ENCODE measurements at regions of chr18 and their contacts with region 1.

Region 1: GRCh38 chr18:21612125-21612991 is at the start of gene SNRPD1:
- DNase-seq: peak; percentile 83 to 90 (median 86)
- H3K4me3 ChIP-seq: peak within 1 kb of the TSS; percentile 93 to 97
- H3K4me3 Mint-ChIP-seq: peak within 1 kb of the TSS; percentile 97 to 100 (median 99)
- H3K27ac ChIP-seq: peak within 1 kb of the TSS; percentile 85
- H3K27ac Mint-ChIP-seq: peak within 1 kb of the TSS; percentile 97 to 100 (median 99)
- H3K4me1 ChIP-seq: peaks cover 41% of the 10 kb centered on the region
- H3K4me1 Mint-ChIP-seq: peaks cover 26 to 55% (median 37%) of the 10 kb centered on the region in 4 donors
- H3K27me3 ChIP-seq: no peaks in the 10 kb centered on the region
- H3K27me3 Mint-ChIP-seq: no peaks in the 10 kb centered on the region
- total RNA-seq, gene SNRPD1: 24.4 to 24.5 TPM

Region 2: GRCh38 chr18:21656402-21656801 is 44.0 kb after region 1 on chr18:
- CTCF ChIA-PET with region 1: no interaction called
- POLR2A ChIA-PET with region 1: no interaction called
- intact Hi-C with region 1: no loop called
- DNase-seq: no peak
- H3K4me3 ChIP-seq: no peak overlapping the region
- H3K4me3 Mint-ChIP-seq: no peak overlapping the region
- H3K27ac ChIP-seq: no peak overlapping the region
- H3K27ac Mint-ChIP-seq: peak overlapping the region in 2 of 7 donors; percentile 43 to 77
- H3K4me1 ChIP-seq: no peaks in the 10 kb centered on the region
- H3K4me1 Mint-ChIP-seq: no peaks in the 10 kb centered on the region
- H3K27me3 ChIP-seq: no peaks in the 10 kb centered on the region
- H3K27me3 Mint-ChIP-seq: no peaks in the 10 kb centered on the region

Region 3: DNA sequence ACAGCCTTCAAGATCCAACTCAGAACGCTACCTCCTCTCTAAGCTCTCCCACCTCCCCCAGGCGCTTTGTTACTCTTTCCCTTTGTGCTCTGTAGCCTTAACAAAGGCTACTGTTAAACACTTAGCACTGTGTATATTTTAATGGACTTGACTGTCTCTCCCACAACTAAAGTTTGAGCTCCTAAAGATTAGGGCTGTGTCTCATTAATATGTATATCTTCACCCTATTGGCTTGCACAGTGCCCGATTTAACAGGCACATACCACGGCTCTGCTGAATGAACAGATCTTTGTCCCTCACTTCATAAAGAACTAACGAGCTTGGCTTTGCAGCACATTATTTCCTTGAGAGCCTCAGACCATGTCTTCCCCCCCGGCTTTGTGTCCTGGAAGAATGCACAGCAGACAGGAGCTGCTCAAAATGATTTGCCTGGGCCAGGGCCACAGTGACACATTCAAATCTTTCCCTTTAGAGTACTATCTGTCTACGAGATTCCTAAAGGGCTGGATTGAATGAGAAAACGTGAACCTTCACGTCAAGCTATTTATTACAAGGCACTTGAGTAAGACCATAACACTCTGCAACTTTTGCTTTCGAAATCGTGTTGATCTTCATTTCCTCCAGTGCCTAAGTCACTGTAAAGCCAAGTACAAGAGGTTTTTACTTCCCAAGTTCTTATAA is 70.2 kb after region 1 on chr18:
- CTCF ChIA-PET with region 1: interaction called, 4 read pairs
- POLR2A ChIA-PET with region 1: interaction called, 10 read pairs
- intact Hi-C with region 1: no loop called
- DNase-seq: peak in 4 of 5 donors; percentile 43 to 54 (median 48)
- H3K4me3 ChIP-seq: peak overlapping the region; percentile 61 to 66
- H3K4me3 Mint-ChIP-seq: no peak overlapping the region
- H3K27ac ChIP-seq: peak overlapping the region; percentile 63
- H3K27ac Mint-ChIP-seq: no peak overlapping the region
- H3K4me1 ChIP-seq: peaks cover 37% of the 10 kb centered on the region
- H3K4me1 Mint-ChIP-seq: peaks cover 9 to 19% (median 15%) of the 10 kb centered on the region in 4 donors
- H3K27me3 ChIP-seq: no peaks in the 10 kb centered on the region
- H3K27me3 Mint-ChIP-seq: no peaks in the 10 kb centered on the region

Region 4: DNA sequence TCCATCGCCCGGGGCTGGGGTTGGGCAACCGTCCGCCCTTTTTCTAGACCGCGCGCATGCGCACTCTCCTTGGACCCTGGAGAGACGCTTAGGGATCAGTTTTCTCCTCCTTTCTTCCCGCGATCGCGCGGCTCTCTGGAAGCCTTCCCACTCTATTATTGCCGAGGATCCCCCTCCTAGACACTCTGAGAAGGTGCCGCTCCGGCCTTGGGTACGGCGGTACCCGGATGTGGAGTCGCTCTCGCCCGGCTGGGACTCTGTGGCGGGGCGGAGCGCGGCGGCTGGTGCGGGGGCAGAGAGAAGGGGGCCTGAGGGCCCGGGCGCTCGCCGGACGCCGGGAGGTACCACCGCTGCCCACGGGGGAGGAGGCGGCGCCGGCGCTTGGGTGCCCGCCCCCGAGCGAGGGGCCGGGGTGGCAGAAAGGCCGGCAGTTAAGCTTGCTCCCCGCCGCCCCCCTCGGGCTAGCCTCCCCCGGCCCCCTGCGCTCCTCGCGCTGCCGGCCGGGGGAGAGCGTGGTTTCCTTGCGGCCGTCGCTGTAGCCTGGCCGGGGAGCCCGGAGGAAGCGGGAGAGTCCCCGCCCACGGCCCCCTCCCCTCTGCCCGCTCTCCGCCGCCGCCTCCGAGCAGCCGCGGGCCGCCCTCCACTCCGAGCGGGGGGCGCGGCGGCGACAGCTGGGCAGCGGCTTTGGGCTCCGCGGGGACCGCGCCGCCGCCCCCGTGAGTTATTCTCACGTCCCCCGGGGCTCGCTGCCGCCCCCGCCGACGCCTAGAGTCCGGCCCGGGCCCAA is 128.6 kb after region 1 on chr18 and contains the start of gene MIB1:
- CTCF ChIA-PET with region 1: interaction called, 8 read pairs
- POLR2A ChIA-PET with region 1: interaction called, 6 read pairs
- intact Hi-C with region 1: loop called (anchors 1 kb)
- DNase-seq: peak in 2 of 5 donors; percentile 98 to 99
- H3K4me3 ChIP-seq: peak within 1 kb of the TSS in 1 of 2 donors; percentile 100
- H3K4me3 Mint-ChIP-seq: peak within 1 kb of the TSS; percentile 94 to 98 (median 95)
- H3K27ac ChIP-seq: peak within 1 kb of the TSS; percentile 94
- H3K27ac Mint-ChIP-seq: peak within 1 kb of the TSS; percentile 91 to 98 (median 97)
- H3K4me1 ChIP-seq: peaks cover 48% of the 10 kb centered on the region
- H3K4me1 Mint-ChIP-seq: peaks cover 29 to 70% (median 47%) of the 10 kb centered on the region in 4 donors
- H3K27me3 ChIP-seq: no peaks in the 10 kb centered on the region
- H3K27me3 Mint-ChIP-seq: no peaks in the 10 kb centered on the region
- total RNA-seq, gene MIB1: 37.6 to 39.0 TPM

Measured in CD4-positive, alpha-beta memory T cell (primary cell).